Heart right ventricle (tissue), 16 donors: ENCODE measurements at regions of chr12 and their contacts with region 1.

Region 1: GRCh38 chr12:123150744-123151456 is at the start of gene PITPNM2:
- DNase-seq: peak; percentile 50 to 74
- ATAC-seq: peak; percentile 69 to 89 (median 78)
- H3K4me3 ChIP-seq: peak within 1 kb of the TSS; percentile 66 to 91 (median 82)
- H3K27ac ChIP-seq: peak within 1 kb of the TSS; percentile 40 to 92 (median 86)
- H3K4me1 ChIP-seq: peaks cover 7 to 33% (median 27%) of the 10 kb centered on the region in 9 donors
- H3K27me3 ChIP-seq: peaks cover 0 to 12% (median 0%) of the 10 kb centered on the region in 7 donors
- CTCF ChIP-seq: peak in 6 of 9 donors; percentile 9 to 48 (median 29)
- total RNA-seq, gene PITPNM2: 13.3 to 32.7 (median 18.7) TPM

Region 2: GRCh38 chr12:123034865-123035264 is 116.0 kb before region 1 on chr12:
- intact Hi-C with region 1: loop called in 4 of 10 experiments (anchors 5 kb)
- DNase-seq: no peak
- ATAC-seq: peak in 5 of 8 donors; percentile 25 to 45 (median 35)
- H3K4me3 ChIP-seq: no peak overlapping the region
- H3K27ac ChIP-seq: no peak overlapping the region
- H3K4me1 ChIP-seq: peaks cover 0 to 20% (median 9%) of the 10 kb centered on the region in 9 donors
- H3K27me3 ChIP-seq: no peaks in the 10 kb centered on the region
- CTCF ChIP-seq: no peak

Region 3: DNA sequence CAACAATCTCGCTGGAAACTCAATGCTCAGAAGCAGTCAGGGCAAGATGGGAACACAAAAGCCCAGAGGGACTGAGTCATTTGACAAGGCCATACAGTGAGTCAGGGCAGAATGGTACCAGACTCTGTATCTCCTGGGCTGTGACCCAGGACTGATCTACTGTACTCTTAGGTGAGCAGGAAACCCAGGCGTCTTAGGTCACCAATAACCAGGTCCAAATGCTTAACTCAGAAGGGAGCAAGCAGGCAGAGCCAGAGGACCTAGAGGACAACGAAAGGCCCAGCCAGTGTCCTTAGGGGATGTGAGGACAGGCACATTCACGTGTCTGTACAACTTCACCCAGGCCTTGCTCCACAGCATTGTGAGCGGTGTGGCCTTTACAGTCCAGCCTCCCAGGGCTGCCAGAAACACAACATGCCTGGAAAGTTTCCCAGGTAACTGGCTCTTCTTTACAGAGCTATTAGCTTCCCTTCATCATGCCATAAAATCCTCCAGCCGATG is 100.5 kb before region 1 on chr12:
- intact Hi-C with region 1: loop called in 1 of 10 experiments (anchors 5 kb)
- DNase-seq: peak in 1 of 2 donors; percentile 54
- ATAC-seq: peak; percentile 74 to 94 (median 90)
- H3K4me3 ChIP-seq: no peak overlapping the region
- H3K27ac ChIP-seq: peak overlapping the region; percentile 12 to 85 (median 64)
- H3K4me1 ChIP-seq: peaks cover 16 to 74% (median 40%) of the 10 kb centered on the region in 9 donors
- H3K27me3 ChIP-seq: no peaks in the 10 kb centered on the region
- CTCF ChIP-seq: no peak

Region 4: DNA sequence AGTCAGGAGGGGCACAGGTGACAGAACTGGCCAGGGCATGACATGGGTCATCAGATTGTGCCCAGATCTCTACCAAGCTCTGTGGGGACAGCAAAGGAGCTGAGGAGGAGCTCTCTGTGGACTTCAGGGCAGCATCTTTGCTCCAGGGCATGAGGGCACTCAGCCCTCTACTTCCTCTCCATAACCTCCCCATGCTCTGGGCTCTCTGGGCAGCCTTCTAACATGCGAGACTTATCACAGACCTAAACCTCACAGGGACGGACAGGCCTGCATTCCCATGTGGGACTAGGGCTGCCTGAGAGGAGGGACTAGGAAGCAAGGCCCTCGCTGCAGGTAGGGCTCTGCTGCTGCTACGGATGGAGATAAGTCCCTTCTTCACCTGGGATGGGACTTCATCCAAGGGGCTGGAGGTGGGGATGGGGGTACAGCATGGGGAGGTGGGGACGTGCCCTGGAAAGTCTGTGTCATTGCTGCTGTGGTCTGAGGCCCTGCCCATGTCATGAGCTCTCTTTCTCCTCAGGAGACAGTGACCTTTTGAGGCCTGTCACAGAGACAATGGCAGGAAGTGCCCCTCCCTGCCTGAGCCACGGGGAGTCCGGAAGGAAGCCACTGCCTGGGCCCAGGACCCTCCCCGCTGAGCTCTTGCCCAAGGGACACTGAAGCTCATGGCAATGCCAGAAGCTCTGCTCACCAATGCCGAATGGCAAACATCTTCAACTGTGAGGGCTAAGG is 44.1 kb before region 1 on chr12:
- intact Hi-C with region 1: loop called in 4 of 10 experiments (anchors 5 kb)
- DNase-seq: peak in 1 of 2 donors; percentile 60
- ATAC-seq: peak; percentile 50 to 84 (median 60)
- H3K4me3 ChIP-seq: no peak overlapping the region
- H3K27ac ChIP-seq: peak overlapping the region; percentile 4 to 92 (median 83)
- H3K4me1 ChIP-seq: peaks cover 36 to 90% (median 77%) of the 10 kb centered on the region in 9 donors
- H3K27me3 ChIP-seq: no peaks in the 10 kb centered on the region
- CTCF ChIP-seq: no peak

Region 5: DNA sequence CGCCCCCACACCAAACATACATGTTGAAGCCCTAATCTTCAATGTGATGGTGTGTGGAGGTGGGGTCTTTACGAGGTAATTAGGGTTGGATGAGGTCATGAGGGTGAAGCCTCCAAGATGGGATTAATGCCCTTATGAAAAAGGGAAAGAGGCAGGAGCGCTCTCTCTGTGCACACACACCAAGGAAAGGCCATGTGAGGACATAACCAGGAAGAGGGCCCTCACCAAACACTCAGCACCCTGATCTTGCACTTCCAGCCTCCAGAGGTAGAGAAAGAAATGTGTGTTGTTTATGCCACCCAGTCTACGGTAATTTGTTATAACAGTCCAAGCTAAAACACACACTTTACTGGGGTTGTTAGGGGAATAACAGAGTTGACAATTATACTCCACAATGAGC is 14.6 kb after region 1 on chr12:
- intact Hi-C with region 1: no loop called
- DNase-seq: no peak
- ATAC-seq: no peak
- H3K4me3 ChIP-seq: no peak overlapping the region
- H3K27ac ChIP-seq: no peak overlapping the region
- H3K4me1 ChIP-seq: peaks cover 0 to 4% (median 0%) of the 10 kb centered on the region in 9 donors
- H3K27me3 ChIP-seq: no peaks in the 10 kb centered on the region
- CTCF ChIP-seq: no peak

Region 6: DNA sequence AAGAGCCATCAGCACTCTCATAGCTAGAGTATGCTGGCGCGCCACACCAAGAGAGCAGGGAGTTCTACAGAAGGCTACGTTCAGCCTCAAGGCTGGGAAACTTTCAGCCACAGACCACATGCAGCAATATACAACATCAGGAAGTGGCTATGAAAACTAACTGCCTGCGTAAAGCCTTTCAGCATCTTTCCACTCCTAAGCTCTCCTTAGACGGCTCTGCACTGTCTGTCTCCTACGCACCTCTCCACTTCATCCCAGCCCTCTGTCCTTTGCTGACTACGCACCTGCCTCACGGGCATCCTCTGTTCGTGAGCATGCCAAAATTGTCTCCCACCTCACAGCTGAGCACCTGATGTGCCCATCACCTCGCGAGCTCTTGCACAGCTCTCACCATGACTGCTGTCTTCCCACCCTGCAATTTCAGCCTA is 72.4 kb after region 1 on chr12:
- intact Hi-C with region 1: loop called in 1 of 10 experiments (anchors 5 kb)
- DNase-seq: no peak
- ATAC-seq: no peak
- H3K4me3 ChIP-seq: no peak overlapping the region
- H3K27ac ChIP-seq: peak overlapping the region in 1 of 10 donors; percentile 55
- H3K4me1 ChIP-seq: peaks cover 0 to 5% (median 0%) of the 10 kb centered on the region in 9 donors
- H3K27me3 ChIP-seq: no peaks in the 10 kb centered on the region
- CTCF ChIP-seq: no peak